ENCODE measurements at regions of chr16 and their contacts with region 1.

Region 1: GRCh38 chr16:56702836-56703235 is 20.6 kb downstream of the MT1X start:
- DNase-seq: no peak
- H3K4me3 Mint-ChIP-seq: no peak overlapping the region
- H3K27ac Mint-ChIP-seq: no peak overlapping the region
- H3K4me1 Mint-ChIP-seq: peaks cover 14% of the 10 kb centered on the region
- H3K27me3 Mint-ChIP-seq: peaks cover 2% of the 10 kb centered on the region

Region 2: DNA sequence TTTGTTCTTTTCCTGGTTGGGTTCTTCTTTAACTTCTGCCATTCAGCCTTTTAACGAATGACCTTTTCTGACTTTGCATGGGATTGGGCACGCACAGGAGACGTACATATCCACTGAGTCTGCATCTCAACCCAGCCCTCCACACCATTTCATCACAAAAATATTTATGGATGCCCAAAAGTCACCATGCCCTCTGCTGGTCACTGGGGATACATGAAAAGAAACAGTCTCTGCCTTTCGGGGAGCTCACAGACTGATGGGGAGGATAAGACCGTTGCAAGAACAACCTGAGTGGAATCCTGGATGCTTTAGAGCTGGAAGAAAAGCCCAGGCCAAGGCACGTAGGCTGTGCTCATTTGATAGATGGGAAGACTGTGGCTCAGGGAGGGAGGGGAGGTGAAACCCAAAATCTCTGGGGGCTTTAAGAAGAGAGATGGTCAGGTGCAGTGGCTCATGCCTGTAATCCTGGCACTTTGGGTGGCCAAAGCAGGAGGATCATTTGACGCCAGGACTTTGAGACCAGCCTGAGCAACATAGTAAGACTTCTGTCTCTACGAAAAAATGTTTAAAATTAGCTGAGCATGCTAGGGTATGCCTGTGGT is 102.3 kb before region 1 on chr16:
- intact Hi-C with region 1: loop called (anchors 1 kb)
- DNase-seq: peak; percentile 80
- H3K4me3 Mint-ChIP-seq: no peak overlapping the region
- H3K27ac Mint-ChIP-seq: no peak overlapping the region
- H3K4me1 Mint-ChIP-seq: peaks cover 17% of the 10 kb centered on the region
- H3K27me3 Mint-ChIP-seq: peaks cover 34% of the 10 kb centered on the region

Region 3: GRCh38 chr16:56673921-56674320 is 28.9 kb before region 1 on chr16:
- intact Hi-C with region 1: loop called (anchors 1 kb)
- DNase-seq: peak; percentile 79
- H3K4me3 Mint-ChIP-seq: no peak overlapping the region
- H3K27ac Mint-ChIP-seq: no peak overlapping the region
- H3K4me1 Mint-ChIP-seq: peaks cover 28% of the 10 kb centered on the region
- H3K27me3 Mint-ChIP-seq: peaks cover 55% of the 10 kb centered on the region

Region 4: GRCh38 chr16:56964243-56965148 is 261.7 kb after region 1 on chr16:
- intact Hi-C with region 1: no loop called
- DNase-seq: peak; percentile 99
- H3K4me3 Mint-ChIP-seq: no peak overlapping the region
- H3K27ac Mint-ChIP-seq: peak overlapping the region; percentile 14
- H3K4me1 Mint-ChIP-seq: peaks cover 19% of the 10 kb centered on the region
- H3K27me3 Mint-ChIP-seq: peaks cover 1% of the 10 kb centered on the region

Measured in activated CD4-positive, alpha-beta T cell treated with anti-CD3 and anti-CD28 coated beads, Interleukin-2, amount 10 ng/mL, durations not matched to agents 24 days and 14 days (primary cell).